ENCODE measurements at regions of chr7 and their contacts with region 1.

Region 1: DNA sequence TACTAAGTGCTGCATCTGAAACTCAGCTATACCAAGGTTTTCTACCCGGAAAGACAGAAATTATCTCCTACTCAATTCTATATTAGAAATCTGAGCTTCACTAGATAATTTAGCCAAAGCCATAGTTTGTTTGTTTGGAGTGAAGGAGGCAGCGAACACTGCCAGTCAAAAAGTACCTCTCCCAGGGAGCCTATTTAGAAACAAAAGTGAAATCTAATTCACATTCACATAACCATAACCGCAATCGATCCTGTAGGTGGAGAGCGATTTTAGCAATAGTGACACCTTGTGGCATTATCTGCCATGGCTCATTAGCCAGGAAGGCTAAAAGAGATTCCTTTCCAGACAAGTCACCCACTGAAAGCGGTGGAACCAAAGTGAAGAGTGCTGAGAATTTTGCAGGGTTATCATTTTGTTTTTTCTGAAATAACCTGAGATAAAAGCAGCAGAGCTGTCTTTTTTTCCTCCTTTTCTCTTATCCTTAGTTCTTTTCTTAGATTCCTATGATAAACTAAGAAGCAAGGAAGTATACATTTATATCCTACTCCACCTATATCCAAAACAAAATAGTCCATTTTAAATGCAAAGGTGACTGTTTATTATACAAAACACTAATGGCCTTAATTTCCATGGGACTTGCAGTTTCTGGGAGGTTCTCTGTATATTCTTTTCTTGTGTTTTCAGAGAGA is 83.7 kb upstream of the BET1 start:
- DNase-seq: no peak
- ATAC-seq: peak; percentile 84

Region 2: GRCh38 chr7:93902777-93903423 is 184.9 kb before region 1 on chr7:
- intact Hi-C with region 1: loop called (anchors 2 kb)
- DNase-seq: no peak
- ATAC-seq: peak; percentile 68

Region 3: DNA sequence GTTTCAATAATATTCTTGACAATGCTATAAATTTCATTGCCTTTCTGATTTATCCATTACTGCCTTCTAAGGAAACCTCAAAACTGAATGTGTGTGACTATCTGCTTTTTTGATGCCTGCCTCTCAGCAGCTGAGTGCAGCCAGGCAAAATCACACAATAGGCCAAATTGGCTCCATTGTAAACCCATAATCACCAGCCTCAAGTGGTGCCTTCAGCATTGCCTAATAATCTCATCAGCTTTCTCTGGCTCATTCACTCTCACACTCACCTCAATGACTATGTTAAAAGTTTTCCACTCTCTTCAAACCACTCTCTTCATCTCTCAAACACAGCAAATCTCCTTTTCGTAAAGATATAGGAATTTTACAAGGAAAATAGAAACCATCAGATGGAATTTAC is 124.4 kb after region 1 on chr7:
- intact Hi-C with region 1: loop called (anchors 5 kb)
- DNase-seq: no peak
- ATAC-seq: peak; percentile 92

Measured in left ventricle myocardium superior (tissue), 1 donor.